Heart left ventricle (tissue), 16 donors: ENCODE measurements at regions of chr22 and their contacts with region 1.

Region 1: GRCh38 chr22:41117127-41117965 is 25.0 kb downstream of the EP300 start:
- DNase-seq: no peak
- ATAC-seq: no peak
- H3K4me3 ChIP-seq: no peak overlapping the region
- H3K27ac ChIP-seq: no peak overlapping the region
- H3K4me1 ChIP-seq: peaks cover 0 to 27% (median 12%) of the 10 kb centered on the region in 12 donors
- H3K27me3 ChIP-seq: no peaks in the 10 kb centered on the region
- CTCF ChIP-seq: no peak
- POLR2A ChIP-seq: no peak

Region 2: DNA sequence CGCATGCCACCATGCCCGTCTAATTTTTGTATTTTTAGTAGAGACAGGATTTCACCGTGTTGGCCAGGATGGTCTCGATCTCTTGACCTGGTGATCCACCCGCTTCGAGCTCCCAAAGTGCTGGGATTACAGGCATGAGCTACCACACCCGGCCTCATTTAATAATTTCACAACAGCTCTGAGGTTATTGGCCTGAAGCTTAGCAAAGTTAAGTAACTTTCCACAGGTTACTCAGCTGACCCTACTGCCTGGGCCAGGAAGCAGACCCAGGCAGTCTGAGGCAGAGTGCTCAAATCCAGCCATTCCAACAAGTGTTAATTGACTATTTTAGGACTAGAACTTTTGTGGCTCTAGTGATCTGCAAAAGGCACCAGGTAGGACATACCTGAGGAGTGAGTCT is 35.6 kb after region 1 on chr22:
- intact Hi-C with region 1: loop called in 1 of 10 experiments (anchors 5 kb)
- DNase-seq: no peak
- ATAC-seq: no peak
- H3K4me3 ChIP-seq: no peak overlapping the region
- H3K27ac ChIP-seq: no peak overlapping the region
- H3K4me1 ChIP-seq: no peaks in the 10 kb centered on the region
- H3K27me3 ChIP-seq: no peaks in the 10 kb centered on the region
- CTCF ChIP-seq: no peak
- POLR2A ChIP-seq: no peak

Region 3: DNA sequence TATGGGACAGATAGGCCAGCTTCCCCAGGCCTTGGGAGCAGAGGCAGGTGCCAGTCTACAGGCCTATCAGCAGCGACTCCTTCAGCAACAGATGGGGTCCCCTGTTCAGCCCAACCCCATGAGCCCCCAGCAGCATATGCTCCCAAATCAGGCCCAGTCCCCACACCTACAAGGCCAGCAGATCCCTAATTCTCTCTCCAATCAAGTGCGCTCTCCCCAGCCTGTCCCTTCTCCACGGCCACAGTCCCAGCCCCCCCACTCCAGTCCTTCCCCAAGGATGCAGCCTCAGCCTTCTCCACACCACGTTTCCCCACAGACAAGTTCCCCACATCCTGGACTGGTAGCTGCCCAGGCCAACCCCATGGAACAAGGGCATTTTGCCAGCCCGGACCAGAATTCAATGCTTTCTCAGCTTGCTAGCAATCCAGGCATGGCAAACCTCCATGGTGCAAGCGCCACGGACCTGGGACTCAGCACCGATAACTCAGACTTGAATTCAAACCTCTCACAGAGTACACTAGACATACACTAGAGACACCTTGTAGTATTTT is 61.2 kb after region 1 on chr22:
- intact Hi-C with region 1: loop called in 1 of 10 experiments (anchors 10 kb)
- DNase-seq: peak; percentile 58 to 88 (median 71)
- ATAC-seq: peak in 3 of 4 donors; percentile 68 to 71 (median 70)
- H3K4me3 ChIP-seq: no peak overlapping the region
- H3K27ac ChIP-seq: no peak overlapping the region
- H3K4me1 ChIP-seq: peaks cover 0 to 20% (median 7%) of the 10 kb centered on the region in 12 donors
- H3K27me3 ChIP-seq: no peaks in the 10 kb centered on the region
- CTCF ChIP-seq: no peak
- POLR2A ChIP-seq: no peak

Region 4: GRCh38 chr22:41197038-41197972 is 80.0 kb after region 1 on chr22:
- intact Hi-C with region 1: no loop called
- DNase-seq: peak; percentile 84 to 93 (median 88)
- ATAC-seq: peak; percentile 88 to 97 (median 96)
- H3K4me3 ChIP-seq: peak overlapping the region; percentile 39 to 91 (median 76)
- H3K27ac ChIP-seq: peak overlapping the region in 10 of 12 donors; percentile 0 to 74 (median 56)
- H3K4me1 ChIP-seq: peaks cover 0 to 20% (median 12%) of the 10 kb centered on the region in 12 donors
- H3K27me3 ChIP-seq: no peaks in the 10 kb centered on the region
- CTCF ChIP-seq: peak in 3 of 12 donors; percentile 17 to 33 (median 18)
- POLR2A ChIP-seq: peak in 1 of 2 donors; percentile 43